ENCODE measurements at regions of chr2 and their contacts with region 1.

Region 1: GRCh38 chr2:241108271-241109209 is 6.5 kb upstream of the MTERF4 start:
- DNase-seq: no peak
- H3K4me3 ChIP-seq: no peak overlapping the region
- H3K27ac ChIP-seq: no peak overlapping the region
- H3K27me3 ChIP-seq: no peaks in the 10 kb centered on the region
- CTCF ChIP-seq: no peak

Region 2: GRCh38 chr2:241139531-241140444 is 31.2 kb after region 1 on chr2:
- intact Hi-C with region 1: loop called in 1 of 2 experiments (anchors 5 kb)
- DNase-seq: peak in 1 of 10 donors; percentile 30
- H3K4me3 ChIP-seq: no peak overlapping the region
- H3K27ac ChIP-seq: no peak overlapping the region
- H3K27me3 ChIP-seq: no peaks in the 10 kb centered on the region
- CTCF ChIP-seq: no peak

Measured in dorsolateral prefrontal cortex (tissue), 120 donors.